Activated CD8-positive, alpha-beta T cell treated with anti-CD3 and anti-CD28 coated beads, Interleukin-2, amount 10 ng/mL, durations not matched to agents 7 days and 5 days (primary cell): ENCODE measurements at regions of chr2 and their contacts with region 1.

Region 1: GRCh38 chr2:68909793-68910674 is 38.8 kb upstream of the BMP10 start:
- DNase-seq: peak; percentile 84
- ATAC-seq: no peak
- H3K4me3 Mint-ChIP-seq: no peak overlapping the region
- H3K27ac Mint-ChIP-seq: peak overlapping the region; percentile 5
- H3K4me1 Mint-ChIP-seq: peaks cover 37% of the 10 kb centered on the region
- H3K27me3 Mint-ChIP-seq: no peaks in the 10 kb centered on the region

Region 2: GRCh38 chr2:68594674-68595492 is 315.2 kb before region 1 on chr2:
- CTCF ChIA-PET with region 1: interaction called, 10 read pairs
- POLR2A ChIA-PET with region 1: no interaction called
- DNase-seq: peak; percentile 71
- ATAC-seq: no peak
- H3K4me3 Mint-ChIP-seq: peak overlapping the region; percentile 3
- H3K27ac Mint-ChIP-seq: peak overlapping the region; percentile 4
- H3K4me1 Mint-ChIP-seq: peaks cover 13% of the 10 kb centered on the region
- H3K27me3 Mint-ChIP-seq: peaks cover 12% of the 10 kb centered on the region

Region 3: GRCh38 chr2:68751397-68752339 is 158.4 kb before region 1 on chr2:
- CTCF ChIA-PET with region 1: interaction called, 56 read pairs
- POLR2A ChIA-PET with region 1: interaction called, 3 read pairs
- DNase-seq: peak; percentile 95
- ATAC-seq: peak; percentile 98
- H3K4me3 Mint-ChIP-seq: peak overlapping the region; percentile 35
- H3K27ac Mint-ChIP-seq: peak overlapping the region; percentile 78
- H3K4me1 Mint-ChIP-seq: peaks cover 87% of the 10 kb centered on the region
- H3K27me3 Mint-ChIP-seq: no peaks in the 10 kb centered on the region

Region 4: GRCh38 chr2:68774569-68775271 is 135.3 kb before region 1 on chr2:
- CTCF ChIA-PET with region 1: interaction called, 11 read pairs
- POLR2A ChIA-PET with region 1: interaction called, 3 read pairs
- DNase-seq: peak; percentile 77
- ATAC-seq: peak; percentile 84
- H3K4me3 Mint-ChIP-seq: peak overlapping the region; percentile 81
- H3K27ac Mint-ChIP-seq: peak overlapping the region; percentile 97
- H3K4me1 Mint-ChIP-seq: peaks cover 86% of the 10 kb centered on the region
- H3K27me3 Mint-ChIP-seq: no peaks in the 10 kb centered on the region

Region 5: DNA sequence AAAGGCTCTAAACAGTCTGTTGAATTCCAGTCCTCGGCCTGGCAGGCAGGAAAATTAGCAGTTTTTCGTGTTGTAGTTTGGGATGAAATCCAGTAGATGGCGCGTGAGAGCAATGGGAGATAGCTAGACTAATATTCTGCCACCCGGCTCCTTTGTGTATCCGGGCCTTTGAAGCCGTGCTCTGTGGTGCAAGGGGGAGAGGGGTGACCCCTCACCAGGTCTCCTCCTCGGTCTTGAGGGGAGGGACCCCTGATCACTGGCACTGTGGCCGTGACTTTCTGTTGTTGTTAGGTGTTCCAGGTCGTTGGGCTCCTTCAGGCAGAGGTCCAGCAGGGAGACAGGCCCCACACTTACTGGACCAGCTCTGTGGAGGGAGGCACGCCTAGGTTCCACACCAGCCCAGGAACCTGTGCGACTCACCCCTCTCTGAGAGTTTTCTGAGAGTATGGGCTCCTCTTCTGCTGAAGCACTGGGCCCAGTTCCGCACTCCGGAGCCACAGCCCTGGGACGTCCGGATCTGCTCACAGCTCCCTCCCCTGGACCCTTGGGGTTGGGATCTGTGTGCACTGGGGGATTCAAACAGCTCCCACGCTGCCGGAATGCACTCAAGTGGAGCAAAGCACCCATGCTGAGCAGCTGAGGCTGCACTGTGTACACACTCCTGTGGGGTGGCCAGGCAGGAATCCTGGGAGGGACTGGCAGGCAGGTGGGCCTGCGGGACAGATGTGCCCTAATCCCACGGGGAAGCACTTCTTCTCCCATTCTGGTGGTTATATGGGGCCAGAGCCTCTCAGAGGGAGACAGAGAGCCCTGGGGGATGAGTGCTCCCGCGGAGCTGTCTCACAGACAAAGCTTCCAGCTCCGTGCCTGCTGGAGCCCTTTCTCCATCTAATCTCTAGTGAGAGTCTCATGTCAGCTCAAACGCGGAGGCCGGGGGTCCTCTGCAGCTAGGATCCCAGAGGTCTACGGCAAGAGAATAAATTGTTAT is 33.8 kb after region 1 on chr2:
- CTCF ChIA-PET with region 1: interaction called, 17 read pairs
- POLR2A ChIA-PET with region 1: no interaction called
- DNase-seq: peak; percentile 68
- ATAC-seq: peak; percentile 75
- H3K4me3 Mint-ChIP-seq: no peak overlapping the region
- H3K27ac Mint-ChIP-seq: no peak overlapping the region
- H3K4me1 Mint-ChIP-seq: peaks cover 2% of the 10 kb centered on the region
- H3K27me3 Mint-ChIP-seq: peaks cover 41% of the 10 kb centered on the region